ENCODE measurements at regions of chr5 and their contacts with region 1.

Region 1: GRCh38 chr5:63164838-63165535 is 586.4 kb downstream of the LRRC70 start:
- DNase-seq: no peak
- H3K4me3 ChIP-seq: no peak overlapping the region
- H3K27ac ChIP-seq: no peak overlapping the region
- H3K4me1 ChIP-seq: peaks cover 2% of the 10 kb centered on the region
- H3K27me3 ChIP-seq: no peaks in the 10 kb centered on the region
- CTCF ChIP-seq: no peak
- EP300 ChIP-seq: no peak
- POLR2A ChIP-seq: no peak

Region 2: DNA sequence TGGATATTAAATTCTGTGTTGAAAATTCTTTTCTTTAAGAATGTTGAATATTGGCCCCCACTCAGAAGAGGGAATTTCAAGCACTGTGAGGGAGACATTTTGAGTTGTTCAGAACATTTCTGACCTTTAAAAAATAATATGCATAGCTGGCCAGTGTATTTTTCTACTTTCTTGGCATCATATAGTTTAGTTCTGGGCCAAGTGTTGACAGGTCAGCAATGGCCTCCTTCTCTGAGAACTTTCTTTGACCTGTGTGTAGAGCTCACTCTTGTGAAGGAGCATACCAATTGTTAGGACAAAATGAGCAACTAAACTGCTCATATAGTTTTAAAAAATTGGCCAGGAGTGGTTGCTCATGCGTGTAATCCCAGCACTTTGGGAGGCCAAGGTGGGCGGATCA is 210.4 kb before region 1 on chr5:
- intact Hi-C with region 1: no loop called
- DNase-seq: no peak
- H3K4me3 ChIP-seq: no peak overlapping the region
- H3K27ac ChIP-seq: no peak overlapping the region
- H3K4me1 ChIP-seq: no peaks in the 10 kb centered on the region
- H3K27me3 ChIP-seq: no peaks in the 10 kb centered on the region
- CTCF ChIP-seq: no peak
- EP300 ChIP-seq: no peak
- POLR2A ChIP-seq: no peak

Region 3: GRCh38 chr5:63125392-63125791 is 39.6 kb before region 1 on chr5:
- intact Hi-C with region 1: loop called in 1 of 4 experiments (anchors 1 kb)
- DNase-seq: no peak
- H3K4me3 ChIP-seq: no peak overlapping the region
- H3K27ac ChIP-seq: no peak overlapping the region
- H3K4me1 ChIP-seq: no peaks in the 10 kb centered on the region
- H3K27me3 ChIP-seq: no peaks in the 10 kb centered on the region
- CTCF ChIP-seq: no peak
- EP300 ChIP-seq: no peak
- POLR2A ChIP-seq: no peak

Region 4: DNA sequence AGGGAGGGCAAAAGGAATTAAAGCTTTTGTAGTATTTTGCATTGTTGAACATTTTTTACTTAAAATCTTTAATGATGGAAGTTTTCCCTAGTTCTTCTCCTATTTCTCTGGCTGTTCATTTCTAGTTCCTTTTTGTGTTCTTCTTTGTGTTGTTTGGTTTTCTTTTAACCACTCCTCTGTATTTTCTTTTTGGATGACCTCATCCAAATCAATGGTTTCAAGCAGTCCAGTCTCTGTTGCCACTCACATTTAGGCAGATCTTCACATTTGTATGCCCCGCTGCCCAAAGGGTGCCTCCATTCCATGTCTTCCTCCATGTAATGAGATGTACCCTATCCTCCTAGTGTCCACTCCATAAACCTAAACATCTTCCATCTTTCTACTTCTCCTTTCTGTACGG is 27.0 kb before region 1 on chr5:
- intact Hi-C with region 1: no loop called
- DNase-seq: no peak
- H3K4me3 ChIP-seq: no peak overlapping the region
- H3K27ac ChIP-seq: no peak overlapping the region
- H3K4me1 ChIP-seq: no peaks in the 10 kb centered on the region
- H3K27me3 ChIP-seq: no peaks in the 10 kb centered on the region
- CTCF ChIP-seq: no peak
- EP300 ChIP-seq: no peak
- POLR2A ChIP-seq: no peak